ENCODE measurements at regions of chr1 and their contacts with region 1.

Region 1: DNA sequence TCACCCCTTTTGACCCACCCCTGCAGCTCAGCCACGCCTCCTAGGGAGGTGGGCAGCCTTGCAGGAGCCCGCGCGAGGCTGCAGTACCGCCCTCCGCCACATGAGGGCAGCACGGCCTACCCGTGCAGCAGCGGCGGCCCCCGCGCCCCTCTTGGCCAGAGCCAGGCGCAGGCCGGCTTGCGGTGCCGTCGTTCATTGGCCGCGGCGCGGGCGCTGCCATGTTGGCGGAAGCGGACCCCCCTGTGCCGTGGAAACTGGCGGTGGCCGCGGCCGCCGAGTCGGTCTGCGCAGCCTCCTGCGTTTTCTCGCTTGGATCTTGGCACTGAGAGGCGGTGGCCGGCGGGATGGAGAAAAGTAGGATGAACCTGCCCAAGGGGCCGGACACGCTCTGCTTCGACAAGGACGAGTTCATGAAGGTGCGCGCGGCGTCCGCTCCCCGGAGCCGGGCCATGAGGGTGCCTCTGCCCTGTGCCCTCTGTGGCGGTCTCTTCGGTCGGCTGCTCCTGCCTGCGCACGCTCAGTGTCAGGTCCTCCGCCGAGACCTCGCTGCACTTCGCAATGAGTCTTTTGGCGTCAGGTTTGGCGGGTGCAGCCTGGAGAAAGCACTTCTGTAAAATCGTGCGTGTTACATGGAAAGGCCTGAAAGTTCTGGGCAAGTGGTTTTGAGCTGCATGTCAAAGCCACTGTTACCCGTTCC is at the start of gene COG2:
- DNase-seq: peak; percentile 87 to 91
- ATAC-seq: peak; percentile 96 to 97
- H3K4me3 ChIP-seq: peak within 1 kb of the TSS; percentile 77 to 89 (median 78)
- H3K27ac ChIP-seq: peak within 1 kb of the TSS; percentile 85 to 94 (median 87)
- H3K4me1 ChIP-seq: peaks cover 21 to 24% of the 10 kb centered on the region in 2 donors
- H3K27me3 ChIP-seq: no peaks in the 10 kb centered on the region
- CTCF ChIP-seq: peak; percentile 98 to 100 (median 99)
- POLR2A ChIP-seq: peak; percentile 60 to 73
- total RNA-seq, gene COG2: 21.5 to 46.5 (median 27.4) TPM

Region 2: GRCh38 chr1:230542054-230542453 is 100.4 kb before region 1 on chr1:
- in situ Hi-C with region 1: no loop called
- intact Hi-C with region 1: no loop called
- DNase-seq: no peak
- ATAC-seq: no peak
- H3K4me3 ChIP-seq: no peak overlapping the region
- H3K27ac ChIP-seq: no peak overlapping the region
- H3K4me1 ChIP-seq: no peaks in the 10 kb centered on the region
- H3K27me3 ChIP-seq: no peaks in the 10 kb centered on the region
- CTCF ChIP-seq: no peak
- POLR2A ChIP-seq: no peak

Region 3: GRCh38 chr1:230581446-230582079 is 60.8 kb before region 1 on chr1:
- in situ Hi-C with region 1: no loop called
- intact Hi-C with region 1: no loop called
- DNase-seq: no peak
- ATAC-seq: no peak
- H3K4me3 ChIP-seq: no peak overlapping the region
- H3K27ac ChIP-seq: no peak overlapping the region
- H3K4me1 ChIP-seq: no peaks in the 10 kb centered on the region
- H3K27me3 ChIP-seq: peaks cover 0 to 4% (median 0%) of the 10 kb centered on the region in 3 donors
- CTCF ChIP-seq: no peak
- POLR2A ChIP-seq: no peak

Region 4: DNA sequence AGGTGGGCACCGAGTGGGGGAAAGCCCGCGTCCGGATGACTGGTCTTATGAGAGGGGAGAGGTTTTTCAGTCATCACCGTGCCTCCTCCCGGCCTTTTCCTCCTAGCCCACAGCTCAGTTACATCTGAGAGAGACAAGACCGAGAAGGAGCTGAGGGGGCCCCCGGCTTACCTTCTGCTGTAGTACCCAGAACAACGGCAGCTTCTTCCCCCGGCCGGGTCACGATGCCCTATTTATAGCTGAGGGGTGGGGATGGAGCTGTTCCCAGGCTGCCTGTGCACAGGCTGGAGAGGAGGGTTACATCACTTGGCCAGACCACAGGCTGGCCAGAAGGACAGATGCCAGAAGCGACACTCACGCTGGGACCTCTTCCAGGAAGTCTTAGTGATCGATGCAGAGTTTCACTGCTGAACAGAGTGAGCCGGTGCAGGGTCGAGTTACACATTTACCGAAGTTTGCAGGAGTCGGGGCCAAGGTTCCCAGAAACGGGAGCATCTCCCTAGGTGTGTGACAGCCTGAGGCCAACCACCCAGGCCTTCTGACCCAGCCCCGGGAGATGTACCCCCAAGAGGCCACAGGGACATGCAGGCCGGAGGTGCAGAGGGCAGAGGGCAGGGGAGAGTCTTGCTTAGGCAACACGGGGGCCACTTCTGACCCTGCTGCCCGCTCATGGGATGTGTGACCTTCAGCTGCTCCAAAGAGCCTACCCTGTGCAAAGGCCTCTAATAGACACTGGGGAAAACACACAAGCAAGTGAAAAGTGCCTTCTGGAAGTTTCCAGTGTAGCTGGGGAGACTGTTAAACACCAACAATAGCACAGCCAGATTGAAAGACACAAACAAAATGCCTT is 71.7 kb after region 1 on chr1 and contains the start of gene AGT:
- in situ Hi-C with region 1: no loop called
- intact Hi-C with region 1: loop called (anchors 1 kb)
- DNase-seq: peak; percentile 86 to 88
- ATAC-seq: peak; percentile 93 to 97
- H3K4me3 ChIP-seq: peak within 1 kb of the TSS; percentile 54 to 62 (median 56)
- H3K27ac ChIP-seq: peak within 1 kb of the TSS; percentile 87 to 92 (median 90)
- H3K4me1 ChIP-seq: peaks cover 23 to 30% of the 10 kb centered on the region in 2 donors
- H3K27me3 ChIP-seq: no peaks in the 10 kb centered on the region
- CTCF ChIP-seq: no peak
- POLR2A ChIP-seq: peak; percentile 59 to 69
- total RNA-seq, gene AGT: 17.3 to 49.6 (median 34.5) TPM

Region 5: DNA sequence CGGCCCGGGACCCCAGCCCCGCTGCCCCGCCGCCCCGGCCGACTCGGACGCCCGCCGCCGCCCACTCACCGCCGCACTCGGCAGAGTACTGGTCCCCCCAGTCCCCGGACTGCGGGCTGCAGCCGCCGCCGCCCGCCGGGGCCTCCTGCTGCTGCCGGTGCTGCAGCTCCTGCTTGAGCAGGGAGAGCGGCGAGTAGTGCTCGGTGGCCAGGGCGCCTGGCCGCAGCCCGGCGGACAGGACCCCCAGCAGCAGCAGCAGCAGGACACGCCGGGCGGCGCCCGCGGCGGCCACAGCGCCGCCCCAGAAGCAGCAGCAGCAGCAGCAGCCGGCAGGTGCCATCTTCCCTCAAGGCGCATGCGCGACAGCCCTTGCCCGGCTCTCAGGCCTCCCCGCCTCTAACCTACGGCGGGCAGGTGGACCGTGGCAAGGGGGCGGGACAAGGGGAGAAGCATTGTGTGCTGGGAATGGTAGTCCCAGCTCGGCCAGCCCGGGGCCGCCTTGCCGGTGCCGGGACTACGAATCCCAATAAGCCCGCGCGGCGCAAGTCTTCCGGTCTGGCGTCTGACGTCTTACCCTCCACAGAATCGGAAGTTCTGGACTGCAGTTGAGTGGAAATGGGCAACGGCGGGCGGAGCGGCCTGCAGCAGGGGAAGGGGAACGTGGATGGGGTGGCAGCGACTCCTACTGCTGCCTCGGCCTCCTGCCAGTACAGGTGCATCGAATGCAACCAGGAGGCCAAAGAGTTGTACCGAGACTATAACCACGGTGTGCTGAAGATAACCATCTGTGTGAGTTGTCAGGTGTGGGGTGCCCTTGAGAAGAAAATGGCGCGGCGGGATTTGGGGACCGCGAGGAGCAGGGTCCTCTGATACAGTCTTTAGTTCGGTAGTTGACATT is 336.3 kb after region 1 on chr1 and contains the starts of genes ARV1 and TTC13:
- in situ Hi-C with region 1: no loop called
- intact Hi-C with region 1: loop called (anchors 2 kb)
- DNase-seq: peak; percentile 98
- ATAC-seq: peak; percentile 96 to 97
- H3K4me3 ChIP-seq: peak within 1 kb of the TSS; percentile 84 to 96 (median 88)
- H3K27ac ChIP-seq: peak within 1 kb of the TSS; percentile 71 to 82 (median 78)
- H3K4me1 ChIP-seq: peaks cover 17 to 24% of the 10 kb centered on the region in 2 donors
- H3K27me3 ChIP-seq: no peaks in the 10 kb centered on the region
- CTCF ChIP-seq: peak in 4 of 5 experiments; percentile 8 to 29 (median 23)
- POLR2A ChIP-seq: peak; percentile 48 to 56
- total RNA-seq, gene ARV1: 7.9 to 21.3 (median 10.5) TPM
- total RNA-seq, gene TTC13: 16.0 to 36.0 (median 22.7) TPM

Measured in gastrocnemius medialis (tissue), 4 donors.